HepG2 (cell line): ENCODE measurements at regions of chr7 and their contacts with region 1.

Region 1: DNA sequence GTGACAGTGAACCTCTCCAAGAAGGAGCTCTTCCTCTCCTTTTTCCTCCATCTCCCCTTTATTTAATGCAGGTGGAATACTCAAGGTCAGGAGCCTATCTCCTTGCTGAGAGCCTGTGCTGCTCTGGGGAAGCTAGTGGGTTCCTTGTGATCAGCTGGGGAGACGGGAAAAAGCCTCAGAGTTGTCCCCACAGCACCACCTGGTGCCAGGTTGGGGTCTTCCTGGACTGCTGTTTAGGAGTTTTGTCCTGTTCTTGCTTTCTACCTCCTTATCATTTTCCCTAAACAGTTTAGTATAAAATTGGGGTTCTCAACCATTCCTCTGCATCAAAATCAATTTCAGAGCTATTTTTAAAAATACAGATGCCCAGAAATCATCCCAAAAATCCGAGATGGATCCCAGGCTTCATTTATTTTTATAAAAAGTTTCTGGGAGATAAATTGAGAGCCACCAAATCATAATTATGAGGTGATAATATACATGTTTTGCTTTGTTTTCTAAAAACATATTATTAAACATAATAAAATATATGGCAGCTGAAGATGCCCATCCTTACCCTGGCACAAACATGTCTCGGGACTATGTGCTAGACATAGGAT is 44.3 kb downstream of the MACC1 start:
- DNase-seq: peak; percentile 33
- ATAC-seq: peak; percentile 93
- H3K4me3 ChIP-seq: no peak overlapping the region
- H3K27ac ChIP-seq: no peak overlapping the region
- H3K4me1 ChIP-seq: no peaks in the 10 kb centered on the region
- H3K27me3 ChIP-seq: no peaks in the 10 kb centered on the region
- CTCF ChIP-seq: peak; percentile 66
- EP300 ChIP-seq: no peak
- POLR2A ChIP-seq: no peak
- RAD21 ChIP-seq: no peak

Region 2: GRCh38 chr7:19754521-19755116 is 418.2 kb before region 1 on chr7:
- CTCF ChIA-PET with region 1: no interaction called
- POLR2A ChIA-PET with region 1: no interaction called
- in situ Hi-C with region 1: loop called (anchors 10 kb)
- intact Hi-C with region 1: loop called (anchors 2 kb)
- DNase-seq: peak; percentile 35
- ATAC-seq: no peak
- H3K4me3 ChIP-seq: no peak overlapping the region
- H3K27ac ChIP-seq: no peak overlapping the region
- H3K4me1 ChIP-seq: no peaks in the 10 kb centered on the region
- H3K27me3 ChIP-seq: no peaks in the 10 kb centered on the region
- CTCF ChIP-seq: peak; percentile 50
- EP300 ChIP-seq: no peak
- POLR2A ChIP-seq: no peak
- RAD21 ChIP-seq: no peak

Region 3: GRCh38 chr7:20299647-20300312 is 126.9 kb after region 1 on chr7:
- CTCF ChIA-PET with region 1: no interaction called
- POLR2A ChIA-PET with region 1: no interaction called
- in situ Hi-C with region 1: no loop called
- intact Hi-C with region 1: loop called (anchors 1 kb)
- DNase-seq: no peak
- ATAC-seq: no peak
- H3K4me3 ChIP-seq: no peak overlapping the region
- H3K27ac ChIP-seq: no peak overlapping the region
- H3K4me1 ChIP-seq: peaks cover 12% of the 10 kb centered on the region
- H3K27me3 ChIP-seq: no peaks in the 10 kb centered on the region
- CTCF ChIP-seq: no peak
- EP300 ChIP-seq: no peak
- POLR2A ChIP-seq: no peak
- RAD21 ChIP-seq: no peak